CD4-positive, alpha-beta T cell (primary cell): ENCODE measurements at regions of chr3 and their contacts with region 1.

Region 1: DNA sequence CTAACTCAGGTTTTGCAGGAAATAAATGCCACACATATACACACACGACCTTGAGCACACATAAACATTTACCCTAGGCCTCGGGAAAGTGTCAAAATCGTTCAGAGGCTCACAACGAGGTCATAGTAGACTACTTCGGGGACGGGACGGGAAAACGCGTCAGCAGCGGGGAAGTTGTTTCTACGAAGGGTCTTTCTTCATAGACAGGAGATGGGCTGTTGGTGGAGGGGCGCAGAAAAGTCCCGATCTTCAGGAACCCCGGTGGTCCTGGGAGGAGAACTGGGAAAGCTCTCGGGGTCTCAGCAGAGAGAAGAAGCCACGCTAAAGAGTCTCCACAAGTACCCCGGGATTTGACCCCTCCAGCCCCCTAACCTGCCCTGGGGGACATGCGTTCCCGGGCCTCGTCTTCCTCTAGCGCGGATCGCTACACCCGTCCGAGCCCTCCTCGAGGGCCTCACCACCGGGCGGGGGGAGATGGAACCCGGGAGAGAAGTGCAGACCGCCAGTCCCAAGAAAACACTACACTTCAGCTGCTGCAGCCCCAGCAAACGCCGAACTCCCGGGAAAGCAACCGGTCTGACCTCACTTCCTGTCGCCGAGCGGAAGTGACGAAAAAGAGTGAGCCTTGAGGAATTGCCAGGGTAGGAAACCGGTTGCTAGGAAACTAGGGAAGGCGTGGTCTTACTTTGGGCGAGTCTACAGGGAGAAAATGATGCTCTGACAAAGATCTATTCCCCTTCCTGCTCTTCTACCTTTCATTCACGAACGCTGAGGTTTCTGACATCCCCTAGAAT is at the start of gene PIK3R4:
- DNase-seq: peak; percentile 84 to 99 (median 90)
- ATAC-seq: peak; percentile 81
- H3K4me3 ChIP-seq: peak within 1 kb of the TSS; percentile 90
- H3K4me3 Mint-ChIP-seq: peak within 1 kb of the TSS; percentile 90
- H3K27ac ChIP-seq: peak within 1 kb of the TSS; percentile 81 to 95
- H3K27ac Mint-ChIP-seq: peak within 1 kb of the TSS; percentile 93
- H3K4me1 ChIP-seq: peaks cover 31% of the 10 kb centered on the region
- H3K4me1 Mint-ChIP-seq: peaks cover 58% of the 10 kb centered on the region
- H3K27me3 ChIP-seq: no peaks in the 10 kb centered on the region
- H3K27me3 Mint-ChIP-seq: no peaks in the 10 kb centered on the region
- CTCF ChIP-seq: no peak
- total RNA-seq, gene PIK3R4: 13.7 to 14.5 TPM

Region 2: GRCh38 chr3:129809297-129809696 is 937.1 kb before region 1 on chr3:
- CTCF ChIA-PET with region 1: no interaction called
- POLR2A ChIA-PET with region 1: no interaction called
- intact Hi-C with region 1: no loop called
- DNase-seq: no peak
- ATAC-seq: no peak
- H3K4me3 ChIP-seq: no peak overlapping the region
- H3K4me3 Mint-ChIP-seq: no peak overlapping the region
- H3K27ac ChIP-seq: no peak overlapping the region
- H3K27ac Mint-ChIP-seq: no peak overlapping the region
- H3K4me1 ChIP-seq: no peaks in the 10 kb centered on the region
- H3K4me1 Mint-ChIP-seq: peaks cover 41% of the 10 kb centered on the region
- H3K27me3 ChIP-seq: no peaks in the 10 kb centered on the region
- H3K27me3 Mint-ChIP-seq: no peaks in the 10 kb centered on the region
- CTCF ChIP-seq: no peak

Region 3: DNA sequence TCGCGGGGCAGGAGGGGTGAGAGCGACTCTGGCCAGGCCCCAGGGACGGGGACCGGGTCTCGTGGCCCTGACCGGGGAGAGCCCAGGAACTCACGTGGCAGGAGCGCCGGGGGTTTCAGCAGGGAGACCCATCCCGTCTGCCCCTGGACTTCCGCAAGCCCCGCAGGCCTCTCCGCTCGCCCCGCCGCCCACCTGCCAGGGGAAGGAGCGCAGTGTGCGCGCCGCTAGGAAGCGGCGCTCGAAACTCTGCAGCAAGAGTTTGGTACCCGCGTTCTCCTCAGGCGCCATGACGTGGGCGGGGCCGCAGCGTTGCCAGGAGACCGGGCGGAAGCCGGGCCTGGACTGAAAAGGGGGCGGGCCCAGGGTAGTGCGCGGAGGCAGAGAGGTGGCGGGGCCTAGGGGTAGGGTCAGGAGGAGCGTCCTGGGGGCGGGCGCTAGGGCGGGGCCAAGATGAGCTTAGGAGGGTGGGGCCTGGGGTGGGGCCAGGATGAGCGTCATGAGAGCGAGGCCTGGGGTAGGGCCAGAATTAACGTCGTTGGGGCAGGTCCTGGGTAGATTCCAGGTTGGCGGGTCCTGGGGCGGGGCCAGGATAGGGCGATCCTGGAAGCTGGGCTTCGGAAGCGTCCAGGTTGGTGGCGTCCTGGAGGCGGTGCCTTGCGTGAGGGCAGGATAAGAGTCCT is 635.1 kb before region 1 on chr3:
- CTCF ChIA-PET with region 1: no interaction called
- POLR2A ChIA-PET with region 1: no interaction called
- intact Hi-C with region 1: loop called in 1 of 2 experiments (anchors 5 kb)
- DNase-seq: peak; percentile 98 to 100 (median 99)
- ATAC-seq: peak; percentile 100
- H3K4me3 ChIP-seq: peak overlapping the region; percentile 65
- H3K4me3 Mint-ChIP-seq: peak overlapping the region; percentile 99
- H3K27ac ChIP-seq: peak overlapping the region; percentile 67 to 95
- H3K27ac Mint-ChIP-seq: peak overlapping the region; percentile 99
- H3K4me1 ChIP-seq: peaks cover 9% of the 10 kb centered on the region
- H3K4me1 Mint-ChIP-seq: peaks cover 14% of the 10 kb centered on the region
- H3K27me3 ChIP-seq: no peaks in the 10 kb centered on the region
- H3K27me3 Mint-ChIP-seq: no peaks in the 10 kb centered on the region
- CTCF ChIP-seq: no peak

Region 4: GRCh38 chr3:131026321-131027178 is 280.1 kb after region 1 on chr3 and contains the starts of genes ASTE1 and NEK11:
- CTCF ChIA-PET with region 1: no interaction called
- POLR2A ChIA-PET with region 1: interaction called, 4 read pairs
- intact Hi-C with region 1: loop called (anchors 2 to 10 kb)
- DNase-seq: peak; percentile 85 to 96 (median 90)
- ATAC-seq: peak; percentile 97
- H3K4me3 ChIP-seq: peak within 1 kb of the TSS; percentile 66
- H3K4me3 Mint-ChIP-seq: peak within 1 kb of the TSS; percentile 93
- H3K27ac ChIP-seq: peak within 1 kb of the TSS; percentile 84 to 89
- H3K27ac Mint-ChIP-seq: peak within 1 kb of the TSS; percentile 94
- H3K4me1 ChIP-seq: peaks cover 30% of the 10 kb centered on the region
- H3K4me1 Mint-ChIP-seq: peaks cover 52% of the 10 kb centered on the region
- H3K27me3 ChIP-seq: no peaks in the 10 kb centered on the region
- H3K27me3 Mint-ChIP-seq: no peaks in the 10 kb centered on the region
- CTCF ChIP-seq: no peak
- total RNA-seq, gene ASTE1: 25.6 to 26.6 TPM
- total RNA-seq, gene NEK11: 1.6 to 4.2 TPM

Region 5: DNA sequence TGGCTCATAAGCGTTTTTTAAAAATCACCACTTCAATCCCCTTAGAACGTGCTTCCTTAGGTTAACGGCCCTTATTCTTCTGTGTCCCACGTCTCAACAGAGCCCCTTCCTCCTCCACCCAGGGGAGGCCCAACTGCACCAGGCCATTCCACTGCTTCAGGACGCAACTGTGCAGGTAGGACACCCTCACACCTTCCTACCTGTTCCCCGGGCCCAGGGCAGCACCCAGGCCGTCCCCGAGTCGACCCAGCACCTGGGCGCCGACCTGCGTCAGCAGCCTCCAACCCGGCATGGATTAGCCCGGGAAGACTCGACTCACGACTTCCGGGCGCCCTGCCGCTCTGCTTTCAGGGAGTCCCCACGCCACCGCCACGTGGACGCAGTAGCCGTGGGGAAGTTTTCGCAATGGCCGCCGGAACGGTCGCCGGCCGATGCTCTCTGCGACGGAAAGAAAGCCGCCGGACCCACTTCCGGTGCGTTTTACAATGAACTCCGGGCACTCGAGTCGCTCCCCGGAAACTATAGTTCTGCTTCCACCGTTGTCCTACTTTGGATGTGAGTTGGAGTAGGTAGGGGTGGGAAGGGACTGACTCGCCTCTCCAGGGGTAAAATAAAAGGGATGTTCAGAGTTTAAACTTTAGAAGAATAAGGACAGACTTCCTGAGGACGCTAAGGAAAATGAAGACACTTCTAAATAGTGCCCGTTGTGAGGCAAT is 756.2 kb after region 1 on chr3 and contains the start of gene MRPL3:
- CTCF ChIA-PET with region 1: no interaction called
- POLR2A ChIA-PET with region 1: no interaction called
- intact Hi-C with region 1: loop called in 1 of 2 experiments (anchors 5 kb)
- DNase-seq: peak; percentile 72 to 93 (median 78)
- ATAC-seq: peak; percentile 89
- H3K4me3 ChIP-seq: peak within 1 kb of the TSS; percentile 71
- H3K4me3 Mint-ChIP-seq: peak within 1 kb of the TSS; percentile 98
- H3K27ac ChIP-seq: peak within 1 kb of the TSS; percentile 66 to 76
- H3K27ac Mint-ChIP-seq: peak within 1 kb of the TSS; percentile 93
- H3K4me1 ChIP-seq: peaks cover 16% of the 10 kb centered on the region
- H3K4me1 Mint-ChIP-seq: peaks cover 54% of the 10 kb centered on the region
- H3K27me3 ChIP-seq: no peaks in the 10 kb centered on the region
- H3K27me3 Mint-ChIP-seq: no peaks in the 10 kb centered on the region
- CTCF ChIP-seq: no peak
- total RNA-seq, gene MRPL3: 36.0 to 37.6 TPM